ENCODE measurements at regions of chr4 and their contacts with region 1.

Region 1: DNA sequence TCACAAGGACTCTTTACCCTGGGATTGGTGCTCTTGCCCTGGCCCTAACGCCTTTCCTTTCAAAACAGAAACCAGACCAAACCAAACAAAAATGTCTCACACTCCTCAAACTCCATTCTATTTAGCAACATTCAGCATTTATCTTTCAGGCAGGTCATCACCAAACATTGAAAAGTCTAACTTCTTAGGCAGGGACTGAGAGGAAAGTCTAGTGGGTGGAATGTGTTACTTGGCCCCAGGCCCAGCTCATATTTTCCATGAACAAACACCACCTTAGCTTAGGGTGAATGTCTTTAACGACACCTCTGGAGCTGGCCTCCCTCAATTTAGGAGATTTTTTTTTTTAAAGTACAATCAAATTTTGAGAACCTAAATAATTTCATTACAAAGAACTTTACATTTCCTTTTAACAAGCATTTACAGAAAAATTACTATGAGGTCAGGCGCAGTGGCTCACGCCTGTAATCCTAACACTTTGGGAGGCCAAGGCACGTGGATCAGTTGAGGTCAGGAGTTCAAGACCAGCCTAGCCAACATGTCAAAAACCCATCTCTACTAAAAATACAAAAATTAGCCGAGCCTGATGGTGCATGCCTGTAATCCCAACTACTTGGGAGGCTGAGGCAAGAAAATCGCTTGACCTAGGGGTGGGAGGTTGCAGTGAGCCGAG is 10.2 kb upstream of the N4BP2 start:
- DNase-seq: peak; percentile 7

Region 2: DNA sequence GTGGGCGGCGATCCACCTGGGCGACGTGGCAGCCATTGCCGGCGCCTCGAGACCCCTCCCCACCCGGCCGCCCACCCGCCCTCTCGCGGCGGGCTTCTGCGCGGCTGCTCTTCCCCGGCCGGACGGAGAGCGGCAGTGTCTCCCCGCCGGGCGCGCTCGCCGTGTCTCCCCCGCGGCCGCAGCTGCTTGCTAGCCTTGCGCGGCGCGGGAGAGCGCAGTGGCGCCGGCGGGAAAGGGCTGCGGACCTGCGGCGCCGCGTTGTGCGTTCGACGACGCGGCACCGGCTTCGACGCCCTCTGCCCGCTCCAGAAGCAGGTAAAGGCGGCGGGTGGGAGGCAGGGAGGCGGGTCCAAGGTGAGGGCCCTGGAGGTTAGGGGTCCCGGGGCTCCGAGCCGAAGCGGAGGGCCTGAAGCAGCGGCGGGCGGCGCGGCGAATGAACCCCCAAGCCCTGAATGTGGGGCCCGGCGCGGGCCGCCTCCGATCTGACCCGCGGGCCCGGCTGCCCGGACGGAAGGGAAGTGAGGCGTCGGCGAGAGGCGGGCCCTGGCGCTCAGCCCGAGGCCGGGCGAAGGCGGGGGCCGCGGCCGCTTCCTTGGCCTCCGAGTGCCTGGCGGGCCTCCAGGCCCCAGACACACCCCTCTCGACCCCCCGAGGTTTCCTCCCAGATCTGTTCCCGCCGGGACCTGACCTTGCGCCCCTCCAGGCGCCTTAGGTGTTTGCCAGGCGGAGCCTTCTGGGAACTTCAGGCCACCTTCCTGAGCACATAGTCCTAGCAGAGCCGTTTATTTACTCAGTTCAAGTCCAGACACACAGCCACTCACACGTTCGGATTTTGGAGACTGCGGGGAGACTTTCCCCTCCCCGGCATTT is 10.5 kb after region 1 on chr4 and contains the start of gene N4BP2:
- CTCF ChIA-PET with region 1: no interaction called
- POLR2A ChIA-PET with region 1: interaction called, 13 read pairs
- DNase-seq: peak; percentile 60

Measured in HEK293T (cell line).